ENCODE measurements at regions of chr16 and their contacts with region 1.

Region 1: DNA sequence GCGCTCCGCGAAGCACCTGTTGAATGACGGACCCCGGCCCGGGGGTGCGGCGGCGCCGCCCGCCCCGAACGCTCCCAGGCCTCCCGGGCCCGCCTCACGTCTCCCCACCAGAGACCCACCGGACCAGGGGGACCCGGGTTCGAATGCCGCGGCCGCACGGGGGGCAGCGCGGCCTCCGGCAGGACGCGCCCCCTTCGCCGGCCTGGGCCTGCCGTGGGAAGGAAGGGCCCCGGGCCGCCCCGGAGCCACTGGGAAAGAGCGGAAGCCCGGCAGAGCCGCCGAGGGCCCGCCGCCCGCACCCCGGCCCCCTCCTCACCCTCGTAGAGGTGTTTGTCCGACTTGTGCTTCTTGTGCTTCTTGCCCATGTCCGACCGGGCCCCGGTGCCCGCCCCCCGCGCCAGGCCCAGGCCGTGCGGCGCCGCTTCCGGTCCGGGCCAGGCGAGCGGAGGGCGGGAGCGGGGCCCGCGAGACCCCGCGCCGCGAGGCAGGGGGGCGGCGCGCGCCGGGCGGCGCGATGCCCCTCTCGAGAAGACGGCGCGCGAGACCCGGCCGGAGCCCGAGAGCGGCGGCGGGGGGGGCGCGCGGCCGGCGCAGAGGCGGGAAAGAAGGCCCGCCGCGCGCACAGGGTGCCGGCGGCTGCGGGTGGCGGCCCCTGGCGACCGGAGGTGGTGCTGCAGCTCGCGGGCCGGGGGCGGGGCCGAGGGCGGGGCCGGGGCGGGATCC is at the start of gene BRD7:
- DNase-seq: peak; percentile 51
- H3K4me3 Mint-ChIP-seq: peak within 1 kb of the TSS; percentile 84
- H3K27ac Mint-ChIP-seq: peak within 1 kb of the TSS; percentile 83
- H3K4me1 Mint-ChIP-seq: peaks cover 33% of the 10 kb centered on the region
- H3K27me3 Mint-ChIP-seq: no peaks in the 10 kb centered on the region
- CTCF ChIP-seq: peak; percentile 32
- total RNA-seq, gene BRD7: 75.9 and 76.4 TPM in 2 replicates

Region 2: GRCh38 chr16:50354629-50355456 is 13.7 kb before region 1 on chr16:
- CTCF ChIA-PET with region 1: interaction called, 59 read pairs
- POLR2A ChIA-PET with region 1: interaction called, 7 read pairs
- intact Hi-C with region 1: no loop called
- DNase-seq: no peak
- H3K4me3 Mint-ChIP-seq: no peak overlapping the region
- H3K27ac Mint-ChIP-seq: no peak overlapping the region
- H3K4me1 Mint-ChIP-seq: peaks cover 5% of the 10 kb centered on the region
- H3K27me3 Mint-ChIP-seq: no peaks in the 10 kb centered on the region
- CTCF ChIP-seq: peak; percentile 49

Region 3: GRCh38 chr16:50384500-50385135 is 16.0 kb after region 1 on chr16:
- CTCF ChIA-PET with region 1: interaction called, 11 read pairs
- POLR2A ChIA-PET with region 1: interaction called, 5 read pairs
- intact Hi-C with region 1: no loop called
- DNase-seq: no peak
- H3K4me3 Mint-ChIP-seq: no peak overlapping the region
- H3K27ac Mint-ChIP-seq: no peak overlapping the region
- H3K4me1 Mint-ChIP-seq: no peaks in the 10 kb centered on the region
- H3K27me3 Mint-ChIP-seq: no peaks in the 10 kb centered on the region
- CTCF ChIP-seq: no peak

Region 4: GRCh38 chr16:50644729-50645128 is 276.2 kb after region 1 on chr16:
- CTCF ChIA-PET with region 1: interaction called, 17 read pairs
- POLR2A ChIA-PET with region 1: interaction called, 4 read pairs
- intact Hi-C with region 1: no loop called
- DNase-seq: peak; percentile 28
- H3K4me3 Mint-ChIP-seq: no peak overlapping the region
- H3K27ac Mint-ChIP-seq: no peak overlapping the region
- H3K4me1 Mint-ChIP-seq: no peaks in the 10 kb centered on the region
- H3K27me3 Mint-ChIP-seq: peaks cover 10% of the 10 kb centered on the region
- CTCF ChIP-seq: peak; percentile 20

Region 5: GRCh38 chr16:50747207-50747956 is 378.8 kb after region 1 on chr16:
- CTCF ChIA-PET with region 1: interaction called, 5 read pairs
- POLR2A ChIA-PET with region 1: interaction called, 4 read pairs
- intact Hi-C with region 1: loop called (anchors 5 kb)
- DNase-seq: peak; percentile 45
- H3K4me3 Mint-ChIP-seq: no peak overlapping the region
- H3K27ac Mint-ChIP-seq: no peak overlapping the region
- H3K4me1 Mint-ChIP-seq: peaks cover 29% of the 10 kb centered on the region
- H3K27me3 Mint-ChIP-seq: no peaks in the 10 kb centered on the region
- CTCF ChIP-seq: peak; percentile 51